Body of pancreas (tissue), 4 donors: ENCODE measurements at regions of chrX and their contacts with region 1.

Region 1: DNA sequence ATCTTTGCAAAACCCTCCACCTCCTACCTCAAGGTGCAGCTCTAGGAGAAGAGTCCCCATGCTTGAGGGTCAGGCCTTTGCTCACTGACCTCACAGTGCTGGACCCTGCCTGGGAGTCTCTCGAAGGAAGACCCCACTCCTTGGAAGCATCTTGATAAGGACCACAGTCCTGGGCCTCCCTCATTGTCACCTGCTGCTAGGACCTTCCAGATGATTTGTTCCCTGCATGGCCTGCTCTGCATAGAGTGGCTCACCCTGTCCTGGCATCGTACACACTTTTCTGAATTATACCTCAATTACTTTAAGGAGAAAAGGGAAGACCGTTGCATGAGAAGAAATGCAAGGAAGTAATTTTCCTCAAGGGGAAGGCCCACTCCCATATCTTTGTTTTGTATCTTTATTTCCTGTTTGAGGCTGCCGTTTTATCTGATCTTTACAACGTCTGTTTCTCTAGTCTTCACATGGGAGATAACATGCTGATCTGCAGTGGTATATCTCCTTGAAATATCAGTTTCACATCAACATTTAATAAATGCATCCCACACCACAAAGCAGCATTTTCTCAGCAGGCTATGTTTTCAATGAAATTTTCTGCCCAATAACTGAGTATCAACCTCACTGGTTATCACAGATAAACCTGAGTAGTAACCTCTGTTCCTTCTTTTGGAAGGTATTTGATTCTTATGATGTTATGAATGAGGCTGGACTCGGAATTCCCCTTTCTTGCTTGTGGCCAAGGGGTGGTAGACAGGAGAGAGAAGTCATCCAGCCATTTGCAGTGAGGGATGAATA is 15.0 kb upstream of the AKAP17A start:
- DNase-seq: no peak
- ATAC-seq: no peak
- H3K4me3 ChIP-seq: no peak overlapping the region
- H3K27ac ChIP-seq: no peak overlapping the region
- H3K4me1 ChIP-seq: no peaks in the 10 kb centered on the region
- H3K27me3 ChIP-seq: no peaks in the 10 kb centered on the region
- CTCF ChIP-seq: no peak
- POLR2A ChIP-seq: no peak

Region 2: GRCh38 chrX:1468250-1468772 is 108.1 kb before region 1 on chrX:
- intact Hi-C with region 1: loop called (anchors 10 kb)
- DNase-seq: no peak
- ATAC-seq: no peak
- H3K4me3 ChIP-seq: no peak overlapping the region
- H3K27ac ChIP-seq: no peak overlapping the region
- H3K4me1 ChIP-seq: no peaks in the 10 kb centered on the region
- H3K27me3 ChIP-seq: no peaks in the 10 kb centered on the region
- CTCF ChIP-seq: no peak
- POLR2A ChIP-seq: no peak

Region 3: GRCh38 chrX:1700757-1701156 is 124.4 kb after region 1 on chrX:
- intact Hi-C with region 1: no loop called
- DNase-seq: no peak
- ATAC-seq: no peak
- H3K4me3 ChIP-seq: no peak overlapping the region
- H3K27ac ChIP-seq: no peak overlapping the region
- H3K4me1 ChIP-seq: no peaks in the 10 kb centered on the region
- H3K27me3 ChIP-seq: no peaks in the 10 kb centered on the region
- CTCF ChIP-seq: no peak
- POLR2A ChIP-seq: no peak